CD4-positive, alpha-beta T cell (primary cell): ENCODE measurements at regions of chr19 and their contacts with region 1.

Region 1: DNA sequence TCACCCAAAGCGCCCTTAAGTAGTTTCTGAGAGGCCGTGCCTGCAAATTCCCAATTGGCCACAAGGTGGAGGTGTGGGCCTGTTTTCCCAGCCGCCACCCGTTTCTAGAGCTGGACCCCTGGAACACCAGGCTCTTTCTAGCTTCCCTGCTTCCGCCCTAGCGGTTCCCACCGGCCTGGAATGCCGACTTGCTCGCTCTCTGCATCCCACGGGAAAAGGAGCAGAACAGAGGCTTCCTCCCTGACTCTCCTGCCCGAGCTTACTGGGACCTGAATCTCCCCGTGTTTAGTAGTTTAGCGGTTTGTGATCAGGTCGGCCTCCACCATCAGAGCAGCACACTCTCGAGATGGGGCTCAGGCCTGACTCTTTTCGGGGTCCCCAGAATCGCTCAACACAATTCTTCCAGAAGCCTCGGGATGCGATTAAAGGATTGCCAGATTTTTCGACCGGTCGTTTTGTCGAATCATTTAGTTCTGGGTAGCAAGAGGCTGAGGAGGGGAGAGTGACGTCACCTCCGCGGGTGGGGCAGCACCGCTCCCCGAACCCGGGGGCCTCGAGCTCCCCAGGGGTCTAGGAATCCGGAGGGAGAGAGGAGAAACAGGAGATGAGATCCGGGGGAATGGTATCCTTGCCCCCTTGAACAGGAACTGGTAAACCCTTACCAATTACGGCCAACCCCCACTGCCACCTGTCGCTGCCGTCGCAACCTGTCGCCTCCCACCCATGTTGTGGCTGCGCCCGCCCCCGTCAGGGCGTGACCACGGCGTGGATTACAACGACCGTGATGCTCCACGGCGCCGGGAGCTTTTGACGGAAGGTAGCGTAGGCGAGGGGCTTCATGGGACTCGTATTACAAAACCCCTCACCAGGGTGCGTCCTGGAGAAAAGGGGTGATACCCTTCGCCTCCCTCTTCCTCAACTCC is 8.0 kb downstream of the NAPSA start:
- DNase-seq: peak; percentile 73 to 94 (median 85)
- ATAC-seq: peak; percentile 84
- H3K4me3 ChIP-seq: peak overlapping the region; percentile 62
- H3K4me3 Mint-ChIP-seq: peak overlapping the region; percentile 94
- H3K27ac ChIP-seq: peak overlapping the region; percentile 94 to 96
- H3K27ac Mint-ChIP-seq: peak overlapping the region; percentile 98
- H3K4me1 ChIP-seq: peaks cover 34% of the 10 kb centered on the region
- H3K4me1 Mint-ChIP-seq: peaks cover 51% of the 10 kb centered on the region
- H3K27me3 ChIP-seq: no peaks in the 10 kb centered on the region
- H3K27me3 Mint-ChIP-seq: no peaks in the 10 kb centered on the region
- CTCF ChIP-seq: peak; percentile 92

Region 2: DNA sequence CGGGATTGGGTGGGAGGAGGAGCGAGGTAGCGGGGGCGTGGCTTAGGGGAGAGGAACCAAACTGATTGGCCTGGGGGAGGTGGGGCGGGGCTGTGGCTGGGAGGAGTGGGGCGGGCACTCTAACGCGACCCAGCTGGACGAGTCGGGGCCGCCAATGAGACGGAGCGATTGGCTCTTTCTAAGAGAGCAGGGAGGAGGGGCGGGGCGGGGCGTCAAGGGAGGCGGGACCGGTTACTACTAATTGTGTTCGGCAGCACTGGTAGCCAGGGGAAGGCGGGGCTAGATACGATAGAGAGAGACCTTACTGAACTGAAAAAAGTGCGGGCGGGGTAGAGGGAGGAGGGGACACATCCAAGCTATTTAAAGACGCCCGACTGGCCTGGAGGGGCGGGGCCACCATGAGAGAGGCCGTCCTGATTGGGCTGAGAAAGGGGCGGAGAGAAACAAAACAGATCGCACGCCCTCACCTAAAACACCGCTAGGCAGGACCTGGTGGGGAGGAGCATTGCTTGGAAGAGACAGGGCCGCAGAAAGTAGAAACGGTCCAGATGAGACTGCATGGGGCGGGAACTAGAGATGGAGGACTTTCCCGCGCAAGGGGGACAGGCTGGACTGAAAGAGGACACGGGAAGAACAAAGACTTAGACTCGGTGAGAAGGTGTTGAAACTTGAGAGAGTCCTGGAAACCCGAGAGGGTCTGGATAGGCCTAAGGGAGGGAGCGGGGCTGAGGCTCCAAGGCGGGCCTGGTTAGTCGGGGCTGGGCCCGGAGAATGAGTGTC is 28.1 kb before region 1 on chr19 and contains the start of gene KCNC3:
- CTCF ChIA-PET with region 1: interaction called, 10 read pairs
- POLR2A ChIA-PET with region 1: interaction called, 38 read pairs
- intact Hi-C with region 1: loop called in 1 of 2 experiments (anchors 1 kb)
- DNase-seq: peak; percentile 79 to 96 (median 92)
- ATAC-seq: peak; percentile 60
- H3K4me3 ChIP-seq: peak within 1 kb of the TSS; percentile 32
- H3K4me3 Mint-ChIP-seq: peak within 1 kb of the TSS; percentile 87
- H3K27ac ChIP-seq: no peak within 1 kb of the TSS
- H3K27ac Mint-ChIP-seq: peak within 1 kb of the TSS; percentile 83
- H3K4me1 ChIP-seq: peaks cover 84% of the 10 kb centered on the region
- H3K4me1 Mint-ChIP-seq: peaks cover 81% of the 10 kb centered on the region
- H3K27me3 ChIP-seq: peaks cover 62 to 63% of the 10 kb centered on the region in 2 experiments
- H3K27me3 Mint-ChIP-seq: peaks cover 73% of the 10 kb centered on the region
- CTCF ChIP-seq: no peak
- total RNA-seq, gene KCNC3: 1.6 to 2.0 TPM

Region 3: DNA sequence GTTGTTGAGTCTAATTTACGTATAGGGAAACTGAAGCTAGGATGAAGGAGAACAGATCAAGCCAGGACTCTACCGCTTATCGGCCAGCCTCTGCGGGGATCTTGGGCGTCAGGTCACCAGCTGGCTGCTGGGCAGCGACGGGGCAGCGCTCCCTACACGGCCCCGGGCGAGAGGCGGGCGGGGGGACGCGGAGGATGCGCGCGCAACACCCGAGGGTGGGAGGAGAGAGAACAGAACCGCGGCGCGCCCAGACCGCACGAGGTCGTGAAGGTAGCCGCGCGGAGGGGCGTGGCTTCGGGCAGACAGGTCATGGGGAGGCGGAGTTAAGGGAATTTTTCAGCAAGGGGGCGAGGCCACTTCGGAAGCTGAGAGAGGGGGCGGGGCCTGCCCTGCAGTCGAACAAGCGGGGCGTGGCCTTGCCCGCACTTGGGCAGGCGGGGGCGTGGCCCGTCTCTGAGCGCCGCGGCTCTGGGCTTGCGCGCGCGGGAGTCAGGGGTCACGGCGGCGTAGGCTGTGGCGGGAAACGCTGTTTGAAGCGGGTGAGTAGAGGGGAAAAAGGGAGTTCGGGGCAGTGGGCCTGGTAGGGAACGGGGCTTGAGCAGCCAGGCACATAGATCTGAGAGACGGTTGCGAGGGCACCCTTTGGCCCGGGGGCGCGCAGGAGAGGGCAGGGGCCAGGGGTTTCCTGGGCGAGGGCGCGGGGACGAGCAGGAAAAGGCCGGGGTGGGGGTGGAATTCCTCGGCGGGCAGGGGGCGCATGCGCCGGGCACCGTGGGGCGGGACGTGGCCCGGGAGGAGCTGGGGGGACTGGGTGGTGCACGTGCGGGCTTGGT is 26.6 kb after region 1 on chr19 and contains the start of gene POLD1:
- CTCF ChIA-PET with region 1: interaction called, 5 read pairs
- POLR2A ChIA-PET with region 1: interaction called, 29 read pairs
- intact Hi-C with region 1: loop called in 1 of 2 experiments (anchors 2 kb)
- DNase-seq: peak; percentile 98 to 100 (median 99)
- ATAC-seq: peak; percentile 88
- H3K4me3 ChIP-seq: peak within 1 kb of the TSS; percentile 66
- H3K4me3 Mint-ChIP-seq: peak within 1 kb of the TSS; percentile 96
- H3K27ac ChIP-seq: peak within 1 kb of the TSS; percentile 70 to 81
- H3K27ac Mint-ChIP-seq: peak within 1 kb of the TSS; percentile 90
- H3K4me1 ChIP-seq: peaks cover 22% of the 10 kb centered on the region
- H3K4me1 Mint-ChIP-seq: peaks cover 38% of the 10 kb centered on the region
- H3K27me3 ChIP-seq: no peaks in the 10 kb centered on the region
- H3K27me3 Mint-ChIP-seq: peaks cover 6% of the 10 kb centered on the region
- CTCF ChIP-seq: no peak
- total RNA-seq, gene POLD1: 22.1 to 24.2 TPM

Region 4: DNA sequence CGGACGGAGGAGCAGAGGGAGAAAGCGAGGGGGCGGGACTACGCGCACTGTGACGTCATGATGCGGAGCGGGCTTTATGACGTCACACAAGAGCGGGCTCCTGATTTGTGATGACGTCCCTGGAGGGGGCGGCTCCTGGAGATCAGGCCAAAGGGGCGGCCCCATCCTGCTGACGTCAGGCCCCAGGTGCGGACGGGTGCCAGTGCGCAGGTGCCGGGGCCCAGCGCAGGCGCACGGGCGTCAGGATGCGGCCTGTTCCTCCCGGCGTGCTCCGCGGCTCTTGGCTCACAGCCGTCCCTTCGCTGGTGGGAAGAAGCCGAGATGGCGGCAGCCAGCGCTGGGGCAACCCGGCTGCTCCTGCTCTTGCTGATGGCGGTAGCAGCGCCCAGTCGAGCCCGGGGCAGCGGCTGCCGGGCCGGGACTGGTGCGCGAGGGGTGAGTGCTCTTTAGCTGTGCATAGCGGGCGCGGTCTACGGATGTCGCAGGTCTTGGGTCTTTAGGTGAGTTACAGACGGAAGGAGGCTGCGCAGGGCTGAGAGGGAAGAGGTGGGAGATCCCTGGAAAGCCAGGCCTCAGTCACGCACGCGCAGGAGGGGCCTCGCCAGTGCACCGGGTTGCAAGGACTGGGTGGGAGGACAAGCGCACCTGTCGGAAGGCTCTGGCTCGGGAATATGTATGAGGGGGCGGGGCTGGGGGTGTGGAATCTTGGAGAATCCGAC is 118.9 kb after region 1 on chr19 and contains the starts of genes EMC10 and GARIN5A:
- CTCF ChIA-PET with region 1: interaction called, 4 read pairs
- POLR2A ChIA-PET with region 1: interaction called, 12 read pairs
- intact Hi-C with region 1: no loop called
- DNase-seq: peak; percentile 81 to 98 (median 92)
- ATAC-seq: peak; percentile 95
- H3K4me3 ChIP-seq: peak within 1 kb of the TSS; percentile 79
- H3K4me3 Mint-ChIP-seq: peak within 1 kb of the TSS; percentile 95
- H3K27ac ChIP-seq: peak within 1 kb of the TSS; percentile 73 to 82
- H3K27ac Mint-ChIP-seq: peak within 1 kb of the TSS; percentile 95
- H3K4me1 ChIP-seq: peaks cover 43% of the 10 kb centered on the region
- H3K4me1 Mint-ChIP-seq: peaks cover 22% of the 10 kb centered on the region
- H3K27me3 ChIP-seq: no peaks in the 10 kb centered on the region
- H3K27me3 Mint-ChIP-seq: no peaks in the 10 kb centered on the region
- CTCF ChIP-seq: no peak
- total RNA-seq, gene EMC10: 80.0 to 80.3 TPM
- total RNA-seq, gene GARIN5A: 0.50 TPM in 1 of 2 experiments, not detected in the other

Region 5: DNA sequence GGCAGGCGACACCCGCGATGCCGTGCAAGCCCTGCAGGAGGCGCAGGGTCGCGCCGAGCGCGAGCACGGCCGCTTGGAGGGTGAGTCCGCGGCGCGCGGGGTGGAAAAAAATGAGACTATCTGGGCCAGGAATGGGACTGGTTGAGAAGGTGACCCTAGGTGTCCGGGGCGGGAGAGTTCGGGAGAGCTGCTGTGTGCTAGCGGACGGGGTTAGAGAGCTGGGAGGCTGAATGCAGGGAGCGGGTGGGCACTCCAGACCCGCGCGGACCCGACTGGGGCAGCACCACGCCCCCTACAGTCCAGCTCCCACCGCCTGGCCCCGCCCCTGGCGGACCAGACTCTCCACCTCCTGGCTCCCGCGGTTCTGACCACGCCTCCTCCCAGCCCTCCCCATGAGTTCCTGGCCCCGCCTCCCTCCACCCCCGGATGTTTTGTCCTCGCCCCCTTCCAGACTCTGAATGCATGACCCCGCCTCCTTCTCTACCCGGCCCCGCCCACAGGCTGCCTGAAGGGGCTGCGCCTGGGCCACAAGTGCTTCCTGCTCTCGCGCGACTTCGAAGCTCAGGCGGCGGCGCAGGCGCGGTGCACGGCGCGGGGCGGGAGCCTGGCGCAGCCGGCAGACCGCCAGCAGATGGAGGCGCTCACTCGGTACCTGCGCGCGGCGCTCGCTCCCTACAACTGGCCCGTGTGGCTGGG is 367.2 kb after region 1 on chr19:
- CTCF ChIA-PET with region 1: no interaction called
- POLR2A ChIA-PET with region 1: interaction called, 10 read pairs
- intact Hi-C with region 1: no loop called
- DNase-seq: peak; percentile 75 to 97 (median 88)
- ATAC-seq: peak; percentile 84
- H3K4me3 ChIP-seq: peak overlapping the region; percentile 54
- H3K4me3 Mint-ChIP-seq: peak overlapping the region; percentile 87
- H3K27ac ChIP-seq: peak overlapping the region in 1 of 2 donors; percentile 41
- H3K27ac Mint-ChIP-seq: peak overlapping the region; percentile 70
- H3K4me1 ChIP-seq: peaks cover 34% of the 10 kb centered on the region
- H3K4me1 Mint-ChIP-seq: peaks cover 36% of the 10 kb centered on the region
- H3K27me3 ChIP-seq: peaks cover 59 to 66% of the 10 kb centered on the region in 2 experiments
- H3K27me3 Mint-ChIP-seq: peaks cover 52% of the 10 kb centered on the region
- CTCF ChIP-seq: peak; percentile 50

Region 6: DNA sequence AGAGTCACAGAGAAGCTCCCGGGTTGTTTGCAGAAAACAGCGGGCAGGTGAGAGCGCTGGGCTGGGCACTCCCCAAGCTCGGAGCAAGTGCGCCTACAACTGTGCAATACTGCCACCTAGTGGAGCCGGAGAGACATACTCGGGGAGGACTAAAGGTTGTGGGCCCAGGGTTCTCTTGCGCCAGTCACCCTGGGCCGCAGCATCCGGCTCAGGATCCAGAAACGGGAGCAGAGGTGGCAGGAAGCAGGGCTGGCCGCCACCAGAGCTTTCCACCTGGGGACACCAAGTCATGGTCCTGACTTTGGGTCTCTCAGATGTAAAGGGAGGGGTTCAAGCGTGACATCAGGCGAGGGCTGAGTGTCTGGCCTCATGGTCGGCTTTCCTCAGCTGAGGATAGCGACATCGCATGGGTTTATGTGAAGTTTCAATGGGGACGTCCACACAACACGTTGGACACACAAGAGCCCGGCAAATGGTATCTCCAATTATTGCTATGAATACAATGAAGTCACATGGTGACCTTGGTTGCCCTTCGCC is 564.9 kb after region 1 on chr19:
- CTCF ChIA-PET with region 1: no interaction called
- POLR2A ChIA-PET with region 1: interaction called, 3 read pairs
- intact Hi-C with region 1: loop called in 1 of 2 experiments (anchors 2 kb)
- DNase-seq: peak; percentile 53 to 87 (median 63)
- ATAC-seq: peak; percentile 93
- H3K4me3 ChIP-seq: no peak overlapping the region
- H3K4me3 Mint-ChIP-seq: no peak overlapping the region
- H3K27ac ChIP-seq: no peak overlapping the region
- H3K27ac Mint-ChIP-seq: no peak overlapping the region
- H3K4me1 ChIP-seq: peaks cover 7% of the 10 kb centered on the region
- H3K4me1 Mint-ChIP-seq: peaks cover 6% of the 10 kb centered on the region
- H3K27me3 ChIP-seq: peaks cover 7 to 21% of the 10 kb centered on the region in 2 experiments
- H3K27me3 Mint-ChIP-seq: peaks cover 50% of the 10 kb centered on the region
- CTCF ChIP-seq: peak; percentile 90